Heart right ventricle (tissue), 16 donors: ENCODE measurements at regions of chr2 and their contacts with region 1.

Region 1: GRCh38 chr2:108988796-108989713 is at the start of gene EDAR:
- DNase-seq: peak in 1 of 2 donors; percentile 32
- ATAC-seq: peak; percentile 71 to 93 (median 89)
- H3K4me3 ChIP-seq: peak within 1 kb of the TSS in 3 of 10 donors; percentile 18 to 27 (median 26)
- H3K27ac ChIP-seq: no peak within 1 kb of the TSS
- H3K4me1 ChIP-seq: no peaks in the 10 kb centered on the region
- H3K27me3 ChIP-seq: peaks cover 0 to 22% (median 13%) of the 10 kb centered on the region in 7 donors
- CTCF ChIP-seq: peak in 8 of 9 donors; percentile 41 to 66 (median 55)
- total RNA-seq, gene EDAR: 0.07 to 0.34 TPM in 2 of 10 donors, not detected in the others

Region 2: DNA sequence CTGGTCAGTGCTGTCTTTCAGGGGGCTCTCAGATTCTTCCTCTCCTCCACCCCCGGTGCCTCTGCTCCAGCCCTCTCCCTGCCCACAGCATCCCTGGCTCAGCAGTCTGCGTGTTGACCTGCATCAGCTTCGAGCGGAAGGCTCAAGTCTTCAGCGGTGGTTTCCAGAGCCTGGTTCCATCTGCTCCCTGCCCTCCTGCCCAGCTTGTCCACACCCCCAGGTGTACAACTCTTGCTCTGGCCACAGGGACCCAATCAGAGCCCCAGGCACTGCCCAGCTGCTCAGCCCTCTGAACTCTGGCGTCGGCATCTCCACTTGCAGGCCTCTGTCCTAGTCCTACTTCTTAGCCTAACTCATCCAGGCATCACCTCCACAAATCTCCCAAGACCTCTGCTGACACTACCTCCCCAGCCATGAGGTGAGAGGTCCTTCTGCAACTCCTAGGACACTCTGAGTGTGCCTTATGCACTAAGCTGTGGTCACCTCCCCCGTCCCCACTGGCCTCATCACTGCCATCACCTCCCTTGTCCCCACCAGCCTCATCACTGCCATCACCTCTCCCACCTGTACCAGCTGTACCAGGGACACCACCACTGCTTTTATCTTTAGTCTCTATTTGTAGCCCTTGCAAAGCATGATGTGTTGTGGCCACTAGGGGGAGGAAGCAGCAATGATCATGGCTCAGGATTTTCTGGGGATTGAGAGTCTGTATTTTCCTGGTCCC is 61.0 kb before region 1 on chr2:
- intact Hi-C with region 1: loop called in 8 of 10 experiments (anchors 2 to 5 kb)
- DNase-seq: no peak
- ATAC-seq: peak in 6 of 8 donors; percentile 13 to 62 (median 34)
- H3K4me3 ChIP-seq: no peak overlapping the region
- H3K27ac ChIP-seq: no peak overlapping the region
- H3K4me1 ChIP-seq: peaks cover 0 to 11% (median 6%) of the 10 kb centered on the region in 9 donors
- H3K27me3 ChIP-seq: peaks cover 0 to 27% (median 0%) of the 10 kb centered on the region in 7 donors
- CTCF ChIP-seq: peak; percentile 44 to 75 (median 68)

Region 3: GRCh38 chr2:109331896-109332848 is 343.1 kb after region 1 on chr2:
- intact Hi-C with region 1: no loop called
- DNase-seq: peak; percentile 63 to 65
- ATAC-seq: peak; percentile 82 to 95 (median 92)
- H3K4me3 ChIP-seq: peak overlapping the region in 7 of 10 donors; percentile 8 to 40 (median 26)
- H3K27ac ChIP-seq: peak overlapping the region in 8 of 10 donors; percentile 20 to 77 (median 62)
- H3K4me1 ChIP-seq: peaks cover 6 to 59% (median 29%) of the 10 kb centered on the region in 9 donors
- H3K27me3 ChIP-seq: peaks cover 0 to 6% (median 0%) of the 10 kb centered on the region in 7 donors
- CTCF ChIP-seq: no peak